Mammary epithelial cell (primary cell): ENCODE measurements at regions of chr19 and their contacts with region 1.

Region 1: DNA sequence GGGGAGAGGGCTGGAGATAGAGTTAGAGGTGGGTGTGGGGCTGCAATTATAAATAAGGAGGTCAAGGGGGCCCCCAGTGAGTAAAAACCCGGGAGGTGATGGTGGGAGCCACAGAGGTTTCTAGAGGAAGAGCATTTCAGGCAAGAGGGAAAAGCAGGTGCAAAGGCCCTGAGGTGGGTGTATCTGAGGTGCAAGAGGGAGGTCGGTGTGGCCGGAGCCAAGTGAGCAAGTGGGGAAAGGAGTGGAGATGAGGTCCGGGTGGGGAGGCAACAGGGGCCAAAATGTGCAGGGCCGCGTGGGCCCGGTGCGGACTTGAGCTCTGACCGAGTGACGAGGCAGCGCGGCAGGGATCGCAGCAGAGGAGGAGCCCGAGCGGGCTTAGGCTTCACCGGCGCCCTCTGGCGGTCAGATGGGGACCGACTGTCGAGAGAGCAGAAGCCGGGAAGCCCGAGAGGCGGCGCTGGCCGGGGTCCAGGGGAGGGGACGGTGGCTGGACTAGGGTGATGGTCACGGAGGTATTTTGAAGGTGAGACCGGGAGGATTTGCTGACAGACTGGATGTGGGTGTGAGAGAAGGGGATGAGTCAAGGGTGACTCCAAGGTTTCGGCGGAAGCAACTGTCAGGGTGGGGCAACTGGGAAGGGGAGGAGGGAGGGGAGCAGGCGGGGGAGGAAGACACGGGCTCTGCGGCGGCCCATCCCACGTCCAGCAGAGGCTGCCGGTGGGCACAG is 17.7 kb upstream of the SPACA4 start:
- DNase-seq: peak; percentile 98
- H3K4me3 ChIP-seq: peak overlapping the region in 1 of 3 experiments; percentile 3
- H3K27ac ChIP-seq: peak overlapping the region; percentile 50
- H3K4me1 ChIP-seq: peaks cover 10% of the 10 kb centered on the region
- H3K27me3 ChIP-seq: no peaks in the 10 kb centered on the region
- CTCF ChIP-seq: peak; percentile 76 to 97

Region 2: GRCh38 chr19:48271531-48272151 is 317.2 kb before region 1 on chr19:
- CTCF ChIA-PET with region 1: no interaction called
- dilution Hi-C with region 1: no loop called
- in situ Hi-C with region 1: no loop called
- intact Hi-C with region 1: loop called (anchors 1 kb)
- DNase-seq: peak; percentile 47
- H3K4me3 ChIP-seq: peak overlapping the region; percentile 28 to 49 (median 45)
- H3K27ac ChIP-seq: peak overlapping the region; percentile 91
- H3K4me1 ChIP-seq: peaks cover 22% of the 10 kb centered on the region
- H3K27me3 ChIP-seq: no peaks in the 10 kb centered on the region
- CTCF ChIP-seq: no peak

Region 3: DNA sequence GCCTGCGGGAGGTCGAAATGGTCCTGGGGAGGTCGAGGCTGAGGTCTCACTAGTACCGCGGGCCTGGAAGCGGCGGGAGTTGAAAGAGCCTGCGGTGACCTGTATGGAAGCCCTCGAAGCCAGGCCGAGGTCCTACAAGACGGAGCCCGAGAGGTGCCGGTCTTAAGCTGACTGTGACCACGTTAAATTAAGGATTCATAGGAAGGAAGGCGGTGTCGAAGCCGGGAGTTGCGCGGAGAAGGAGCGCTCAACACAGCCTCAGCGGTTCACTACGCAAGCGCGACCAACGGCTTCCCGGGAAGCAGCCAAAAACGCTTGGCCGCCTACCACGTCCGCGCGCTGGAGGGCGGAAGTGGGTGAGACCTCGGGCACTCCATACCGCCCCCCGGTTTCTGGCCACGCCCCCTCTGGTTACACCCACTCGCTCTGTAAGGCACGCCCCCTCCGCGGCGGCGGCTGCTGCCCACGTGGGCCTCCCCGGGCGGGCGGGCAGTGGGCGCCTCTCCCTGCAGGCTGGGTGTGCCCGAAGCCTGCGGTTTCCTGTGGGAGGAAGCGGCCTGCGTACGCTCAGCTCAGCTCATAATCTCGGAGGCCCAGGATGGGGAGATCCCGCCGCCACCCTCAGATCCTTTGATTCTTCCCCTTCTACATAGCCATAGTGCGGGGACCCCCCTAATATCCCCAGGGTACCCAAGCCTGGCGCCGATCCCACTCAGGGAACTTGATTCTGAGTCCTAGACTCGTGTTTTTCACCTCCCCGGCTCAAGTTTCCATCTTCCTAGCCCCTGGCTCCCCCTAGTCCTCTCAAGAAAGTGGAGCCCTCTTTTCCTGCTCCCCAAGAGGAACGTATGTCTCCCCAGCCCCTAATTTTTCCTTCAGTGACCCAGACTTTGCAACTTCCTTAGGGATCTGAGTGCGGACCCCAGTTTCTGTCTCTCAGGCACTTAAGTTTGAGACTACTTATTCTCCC is 266.9 kb before region 1 on chr19:
- CTCF ChIA-PET with region 1: interaction called, 3 read pairs
- dilution Hi-C with region 1: no loop called
- in situ Hi-C with region 1: loop called (anchors 10 to 25 kb)
- intact Hi-C with region 1: loop called (anchors 1 kb)
- DNase-seq: peak; percentile 99
- H3K4me3 ChIP-seq: peak overlapping the region; percentile 57 to 76 (median 63)
- H3K27ac ChIP-seq: peak overlapping the region; percentile 96
- H3K4me1 ChIP-seq: peaks cover 30% of the 10 kb centered on the region
- H3K27me3 ChIP-seq: no peaks in the 10 kb centered on the region
- CTCF ChIP-seq: peak in 1 of 2 donors; percentile 29

Region 4: DNA sequence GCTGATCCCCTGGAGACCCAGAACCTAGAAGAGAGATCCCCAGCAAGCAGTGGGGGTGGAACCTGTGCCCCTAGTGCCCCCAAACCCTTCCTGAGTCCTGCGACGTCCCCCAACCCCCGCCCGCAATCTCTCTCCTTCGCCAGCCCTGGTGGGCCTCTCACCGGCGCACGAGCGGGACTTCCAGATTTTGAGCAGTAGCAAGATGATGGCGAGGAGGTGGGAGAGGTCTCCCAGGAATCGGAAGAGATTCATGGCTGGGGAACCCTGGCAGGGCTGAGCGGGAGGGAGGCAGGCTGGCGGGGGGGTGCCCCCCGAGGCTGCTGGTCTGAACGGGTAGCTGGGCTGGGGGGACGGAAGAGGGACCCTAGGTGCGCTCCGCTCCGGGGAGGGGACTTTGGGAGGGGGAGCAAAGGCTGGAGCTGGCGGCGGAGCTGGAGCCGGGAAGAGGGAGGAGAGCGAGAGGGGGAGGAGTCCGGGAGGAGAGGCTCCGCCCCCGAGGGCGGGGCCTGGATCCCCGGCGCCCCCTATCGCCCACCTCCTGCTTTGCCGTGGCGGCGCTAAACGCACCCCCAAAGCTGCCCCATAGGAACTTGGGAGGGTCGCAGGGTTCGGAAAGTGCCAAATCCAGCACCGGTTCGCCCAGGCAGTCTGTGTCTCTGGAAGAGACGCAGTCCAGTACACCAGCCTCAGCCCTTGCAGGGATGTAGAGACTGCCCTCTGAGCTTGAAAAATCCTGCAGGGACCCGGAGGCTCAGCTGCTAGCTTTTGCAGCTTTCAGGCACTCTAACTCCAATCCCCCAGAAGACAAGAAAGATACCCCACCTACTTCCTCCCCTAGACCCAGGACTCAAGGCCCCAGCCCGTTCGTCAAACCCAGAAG is 197.5 kb before region 1 on chr19 and contains the start of gene KDELR1:
- CTCF ChIA-PET with region 1: interaction called, 6 read pairs
- dilution Hi-C with region 1: no loop called
- in situ Hi-C with region 1: no loop called
- intact Hi-C with region 1: loop called (anchors 1 kb)
- DNase-seq: peak; percentile 58
- H3K4me3 ChIP-seq: peak within 1 kb of the TSS; percentile 63 to 94 (median 93)
- H3K27ac ChIP-seq: peak within 1 kb of the TSS; percentile 87
- H3K4me1 ChIP-seq: peaks cover 12% of the 10 kb centered on the region
- H3K27me3 ChIP-seq: peaks cover 10% of the 10 kb centered on the region
- CTCF ChIP-seq: peak; percentile 70 to 95
- total RNA-seq, gene KDELR1: 73.2 to 171 TPM

Region 5: GRCh38 chr19:48492925-48493717 is 95.7 kb before region 1 on chr19:
- CTCF ChIA-PET with region 1: interaction called, 23 read pairs
- dilution Hi-C with region 1: no loop called
- in situ Hi-C with region 1: no loop called
- intact Hi-C with region 1: loop called (anchors 1 kb)
- DNase-seq: peak; percentile 97
- H3K4me3 ChIP-seq: peak overlapping the region; percentile 46 to 86 (median 76)
- H3K27ac ChIP-seq: peak overlapping the region; percentile 47
- H3K4me1 ChIP-seq: peaks cover 23% of the 10 kb centered on the region
- H3K27me3 ChIP-seq: peaks cover 3% of the 10 kb centered on the region
- CTCF ChIP-seq: no peak

Region 6: GRCh38 chr19:48608798-48609263 is 20.0 kb after region 1 on chr19:
- CTCF ChIA-PET with region 1: no interaction called
- dilution Hi-C with region 1: no loop called
- in situ Hi-C with region 1: no loop called
- intact Hi-C with region 1: loop called (anchors 2 kb)
- DNase-seq: no peak
- H3K4me3 ChIP-seq: no peak overlapping the region
- H3K27ac ChIP-seq: no peak overlapping the region
- H3K4me1 ChIP-seq: peaks cover 3% of the 10 kb centered on the region
- H3K27me3 ChIP-seq: no peaks in the 10 kb centered on the region
- CTCF ChIP-seq: peak; percentile 50 to 59